CD4-positive, alpha-beta T cell (primary cell): ENCODE measurements at regions of chr2 and their contacts with region 1.

Region 1: DNA sequence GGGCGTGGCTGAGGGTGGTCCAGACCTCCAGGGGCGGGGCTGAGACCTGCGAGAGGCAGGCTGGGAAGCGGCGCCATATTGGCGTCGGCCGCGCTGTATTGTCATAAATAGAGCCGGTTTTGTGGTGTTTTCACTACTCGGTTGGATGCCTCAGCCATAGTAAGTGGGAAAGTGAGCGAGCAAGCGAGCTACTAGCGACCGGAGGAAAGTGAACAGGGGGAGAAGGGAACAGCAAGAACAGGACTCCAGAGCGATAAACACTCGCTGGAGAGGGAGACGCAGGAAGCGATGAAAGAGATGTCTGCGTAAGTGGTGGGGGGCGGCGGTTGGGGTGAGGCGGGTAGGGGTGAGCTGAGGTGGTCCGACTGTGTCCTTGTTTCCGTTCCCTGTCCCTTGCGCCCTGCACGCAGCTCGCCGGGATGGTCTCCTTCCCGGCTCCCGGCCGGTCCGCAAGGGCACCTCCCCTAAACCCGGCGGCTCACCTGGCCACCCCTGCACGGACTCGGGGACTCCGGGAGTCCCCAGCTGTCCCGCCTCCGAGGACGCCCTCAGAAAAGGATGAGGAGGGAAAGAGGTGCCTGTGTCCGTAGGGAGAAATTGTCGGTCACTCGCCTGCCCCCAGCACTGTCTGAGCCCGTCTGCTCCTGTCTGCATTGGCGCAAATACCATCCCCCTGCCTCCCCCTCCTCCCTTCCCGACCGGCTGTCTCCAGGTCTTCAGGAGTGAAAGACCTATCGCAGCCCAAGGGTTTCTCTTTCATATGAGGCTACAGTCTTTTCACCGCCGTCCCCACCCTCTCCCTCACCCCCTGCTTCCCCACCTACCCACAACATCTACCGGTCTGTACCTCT is at the start of gene PAPOLG:
- DNase-seq: peak; percentile 93 to 99 (median 96)
- ATAC-seq: peak; percentile 98
- H3K4me3 ChIP-seq: peak within 1 kb of the TSS; percentile 84
- H3K4me3 Mint-ChIP-seq: peak within 1 kb of the TSS; percentile 98
- H3K27ac ChIP-seq: peak within 1 kb of the TSS; percentile 80 to 91
- H3K27ac Mint-ChIP-seq: peak within 1 kb of the TSS; percentile 86
- H3K4me1 ChIP-seq: peaks cover 24% of the 10 kb centered on the region
- H3K4me1 Mint-ChIP-seq: peaks cover 50% of the 10 kb centered on the region
- H3K27me3 ChIP-seq: no peaks in the 10 kb centered on the region
- H3K27me3 Mint-ChIP-seq: no peaks in the 10 kb centered on the region
- CTCF ChIP-seq: no peak
- total RNA-seq, gene PAPOLG: 18.2 to 19.9 TPM

Region 2: DNA sequence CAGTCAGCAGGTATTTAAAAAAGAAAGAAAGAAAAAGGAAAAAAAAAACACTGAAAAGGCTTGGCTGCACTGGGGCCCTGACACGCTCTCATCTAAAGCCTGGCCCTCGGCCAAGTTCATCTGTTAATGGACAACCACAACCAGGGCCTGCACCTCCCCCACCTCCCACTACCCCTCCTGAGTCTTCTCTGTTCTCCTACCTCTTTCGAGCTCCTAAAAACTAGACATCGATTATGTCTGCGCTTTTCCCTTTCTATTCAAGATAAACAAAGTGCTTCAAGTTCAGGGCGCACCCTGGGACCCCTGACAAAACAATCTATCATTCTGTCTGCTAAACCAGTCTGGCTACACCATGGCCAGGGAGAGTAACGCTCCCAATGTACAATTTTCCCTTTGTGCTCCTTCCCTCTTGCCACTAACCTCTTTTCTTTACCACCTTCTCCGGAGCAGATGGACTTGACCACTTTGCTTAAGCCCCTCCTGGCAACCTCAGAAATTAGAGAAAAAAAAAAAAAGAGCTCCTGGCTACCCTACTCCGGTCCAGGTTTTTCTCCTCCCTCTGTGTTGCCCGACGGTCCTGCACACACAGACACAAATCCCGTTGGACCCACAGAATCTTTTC is 225.6 kb before region 1 on chr2:
- CTCF ChIA-PET with region 1: no interaction called
- POLR2A ChIA-PET with region 1: no interaction called
- intact Hi-C with region 1: no loop called
- DNase-seq: no peak
- ATAC-seq: no peak
- H3K4me3 ChIP-seq: no peak overlapping the region
- H3K4me3 Mint-ChIP-seq: no peak overlapping the region
- H3K27ac ChIP-seq: no peak overlapping the region
- H3K27ac Mint-ChIP-seq: no peak overlapping the region
- H3K4me1 ChIP-seq: no peaks in the 10 kb centered on the region
- H3K4me1 Mint-ChIP-seq: peaks cover 9% of the 10 kb centered on the region
- H3K27me3 ChIP-seq: peaks cover 3% of the 10 kb centered on the region in 2 experiments
- H3K27me3 Mint-ChIP-seq: peaks cover 51% of the 10 kb centered on the region
- CTCF ChIP-seq: no peak

Region 3: DNA sequence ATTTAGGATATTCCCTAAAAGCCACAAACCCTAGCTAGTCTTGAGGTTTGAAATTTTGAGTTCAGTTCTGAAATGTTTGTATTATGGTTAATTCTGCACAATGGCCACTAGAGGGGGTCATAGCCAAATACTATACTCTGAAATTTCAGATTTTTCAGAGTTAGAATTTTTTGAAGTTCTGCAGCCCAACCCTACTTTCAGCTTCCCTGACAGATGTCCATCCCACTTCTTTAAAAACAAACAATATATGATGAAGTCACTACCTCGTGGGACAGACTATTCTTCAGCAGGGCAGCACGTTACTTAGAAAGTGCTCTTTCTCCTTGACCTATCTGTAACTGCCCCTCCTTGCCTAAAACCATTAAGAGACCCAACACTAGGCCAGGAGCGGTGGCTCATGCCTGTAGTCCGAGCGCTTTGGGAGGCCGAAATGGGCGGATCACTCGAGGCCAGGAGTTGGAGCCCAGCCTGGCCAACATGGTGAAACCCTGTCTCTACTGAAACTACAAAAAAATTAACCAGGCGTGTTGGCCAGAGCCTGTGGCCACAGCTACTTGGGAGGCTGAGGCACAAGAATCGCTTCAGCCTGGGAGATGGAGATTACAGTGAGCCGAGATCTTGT is 48.6 kb before region 1 on chr2:
- CTCF ChIA-PET with region 1: interaction called, 3 read pairs
- POLR2A ChIA-PET with region 1: interaction called, 3 read pairs
- intact Hi-C with region 1: loop called (anchors 2 to 5 kb)
- DNase-seq: peak in 3 of 14 experiments; percentile 49 to 62 (median 54)
- ATAC-seq: peak; percentile 59
- H3K4me3 ChIP-seq: no peak overlapping the region
- H3K4me3 Mint-ChIP-seq: no peak overlapping the region
- H3K27ac ChIP-seq: no peak overlapping the region
- H3K27ac Mint-ChIP-seq: no peak overlapping the region
- H3K4me1 ChIP-seq: no peaks in the 10 kb centered on the region
- H3K4me1 Mint-ChIP-seq: no peaks in the 10 kb centered on the region
- H3K27me3 ChIP-seq: no peaks in the 10 kb centered on the region
- H3K27me3 Mint-ChIP-seq: peaks cover 6% of the 10 kb centered on the region
- CTCF ChIP-seq: peak; percentile 80

Region 4: GRCh38 chr2:60735496-60736250 is 20.7 kb before region 1 on chr2:
- CTCF ChIA-PET with region 1: no interaction called
- POLR2A ChIA-PET with region 1: interaction called, 14 read pairs
- intact Hi-C with region 1: no loop called
- DNase-seq: peak in 9 of 14 experiments; percentile 8 to 39 (median 25)
- ATAC-seq: peak; percentile 39
- H3K4me3 ChIP-seq: peak overlapping the region; percentile 37
- H3K4me3 Mint-ChIP-seq: peak overlapping the region; percentile 88
- H3K27ac ChIP-seq: no peak overlapping the region
- H3K27ac Mint-ChIP-seq: no peak overlapping the region
- H3K4me1 ChIP-seq: no peaks in the 10 kb centered on the region
- H3K4me1 Mint-ChIP-seq: peaks cover 14% of the 10 kb centered on the region
- H3K27me3 ChIP-seq: peaks cover 9 to 20% of the 10 kb centered on the region in 2 experiments
- H3K27me3 Mint-ChIP-seq: peaks cover 38% of the 10 kb centered on the region
- CTCF ChIP-seq: no peak

Region 5: DNA sequence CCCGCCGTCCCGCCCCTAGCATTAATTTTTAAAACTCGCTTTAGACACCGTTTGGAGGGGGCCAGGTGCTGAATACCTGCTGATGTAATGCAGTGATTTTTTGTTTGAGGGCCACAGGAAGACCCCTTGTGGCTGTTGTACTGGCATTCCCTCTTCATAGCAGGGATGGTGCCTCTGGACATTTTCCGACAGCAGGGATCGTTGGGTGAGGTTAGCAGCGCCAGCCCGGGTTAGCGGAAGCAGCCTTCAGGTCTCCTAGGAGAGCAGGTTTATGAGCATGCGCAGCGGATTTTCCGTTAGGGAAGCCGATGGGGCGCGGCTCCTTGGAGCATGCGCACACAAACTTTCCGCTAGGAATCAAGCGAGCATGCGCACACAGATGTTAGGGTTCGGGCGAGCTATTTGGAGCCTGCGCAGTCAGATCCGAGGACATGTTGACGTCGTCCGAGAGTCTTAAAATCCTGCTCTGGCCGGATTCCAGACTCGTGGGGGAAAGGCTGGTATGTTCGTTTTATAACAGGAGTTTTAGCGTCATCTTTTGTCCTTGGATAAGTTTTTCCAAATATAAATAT is 388.4 kb after region 1 on chr2:
- CTCF ChIA-PET with region 1: no interaction called
- POLR2A ChIA-PET with region 1: no interaction called
- intact Hi-C with region 1: loop called in 1 of 2 experiments (anchors 2 kb)
- DNase-seq: peak; percentile 80 to 97 (median 88)
- ATAC-seq: peak; percentile 89
- H3K4me3 ChIP-seq: peak overlapping the region; percentile 70
- H3K4me3 Mint-ChIP-seq: peak overlapping the region; percentile 89
- H3K27ac ChIP-seq: peak overlapping the region; percentile 21 to 69
- H3K27ac Mint-ChIP-seq: peak overlapping the region; percentile 86
- H3K4me1 ChIP-seq: peaks cover 12% of the 10 kb centered on the region
- H3K4me1 Mint-ChIP-seq: peaks cover 7% of the 10 kb centered on the region
- H3K27me3 ChIP-seq: no peaks in the 10 kb centered on the region
- H3K27me3 Mint-ChIP-seq: no peaks in the 10 kb centered on the region
- CTCF ChIP-seq: no peak

Region 6: GRCh38 chr2:61689568-61689967 is 933.2 kb after region 1 on chr2:
- CTCF ChIA-PET with region 1: no interaction called
- POLR2A ChIA-PET with region 1: no interaction called
- intact Hi-C with region 1: loop called in 1 of 2 experiments (anchors 5 kb)
- DNase-seq: peak in 1 of 14 experiments; percentile 7
- ATAC-seq: no peak
- H3K4me3 ChIP-seq: no peak overlapping the region
- H3K4me3 Mint-ChIP-seq: no peak overlapping the region
- H3K27ac ChIP-seq: no peak overlapping the region
- H3K27ac Mint-ChIP-seq: no peak overlapping the region
- H3K4me1 ChIP-seq: peaks cover 5% of the 10 kb centered on the region
- H3K4me1 Mint-ChIP-seq: peaks cover 9% of the 10 kb centered on the region
- H3K27me3 ChIP-seq: no peaks in the 10 kb centered on the region
- H3K27me3 Mint-ChIP-seq: no peaks in the 10 kb centered on the region
- CTCF ChIP-seq: no peak

Region 7: DNA sequence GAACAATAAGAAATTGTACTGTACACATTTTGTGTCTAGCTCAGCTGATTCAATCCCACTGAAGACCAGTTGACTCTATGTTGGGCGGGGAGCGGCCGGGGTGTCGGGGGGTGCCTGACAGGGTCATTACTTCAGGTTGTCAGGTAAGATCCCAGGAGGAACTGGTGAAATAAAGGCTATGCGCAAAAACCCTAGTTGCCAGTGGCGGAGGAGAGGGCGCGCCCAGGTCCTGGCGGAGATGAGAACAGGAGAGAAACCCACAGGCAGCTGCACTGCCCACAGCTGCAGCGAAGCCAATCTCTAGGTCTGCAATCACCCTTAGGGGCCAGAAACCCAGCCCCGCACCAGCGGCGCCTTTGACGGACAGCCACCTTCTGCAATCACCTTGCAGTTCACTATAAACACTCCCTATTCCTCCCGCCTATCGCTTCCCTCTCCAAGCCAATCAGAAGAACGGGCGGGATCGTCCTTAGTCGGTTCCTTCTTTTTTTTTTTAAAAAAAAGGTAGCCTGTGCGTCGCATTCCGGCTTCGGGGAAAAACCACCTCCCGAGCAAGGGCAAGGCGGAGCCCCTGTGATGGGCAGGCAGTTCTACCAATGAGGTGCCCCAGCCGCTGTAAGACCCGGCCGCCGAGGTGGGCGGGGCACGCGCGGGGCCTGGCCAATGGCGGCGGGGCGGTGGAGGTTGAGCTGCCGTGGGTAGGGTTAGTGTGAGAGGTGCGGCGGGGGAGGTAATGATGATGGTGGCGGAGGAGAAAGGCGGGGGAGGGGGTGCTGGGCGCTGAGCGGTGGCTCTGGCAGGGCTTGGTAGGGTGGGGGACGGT is 1948.8 kb after region 1 on chr2 and contains the start of gene EHBP1:
- CTCF ChIA-PET with region 1: no interaction called
- POLR2A ChIA-PET with region 1: no interaction called
- intact Hi-C with region 1: loop called in 1 of 2 experiments (anchors 5 kb)
- DNase-seq: peak; percentile 93 to 99 (median 97)
- ATAC-seq: peak; percentile 96
- H3K4me3 ChIP-seq: peak within 1 kb of the TSS; percentile 80
- H3K4me3 Mint-ChIP-seq: peak within 1 kb of the TSS; percentile 91
- H3K27ac ChIP-seq: peak within 1 kb of the TSS in 1 of 2 donors; percentile 24
- H3K27ac Mint-ChIP-seq: peak within 1 kb of the TSS; percentile 88
- H3K4me1 ChIP-seq: peaks cover 21% of the 10 kb centered on the region
- H3K4me1 Mint-ChIP-seq: peaks cover 36% of the 10 kb centered on the region
- H3K27me3 ChIP-seq: no peaks in the 10 kb centered on the region
- H3K27me3 Mint-ChIP-seq: no peaks in the 10 kb centered on the region
- CTCF ChIP-seq: no peak
- total RNA-seq, gene EHBP1: 21.4 to 22.3 TPM